Astrocyte of the cerebellum (primary cell): ENCODE measurements at regions of chr5 and their contacts with region 1.

Region 1: GRCh38 chr5:169980418-169981053 is at the start of gene INSYN2B:
- DNase-seq: peak; percentile 83
- H3K4me3 ChIP-seq: peak within 1 kb of the TSS; percentile 59
- CTCF ChIP-seq: peak; percentile 71

Region 2: DNA sequence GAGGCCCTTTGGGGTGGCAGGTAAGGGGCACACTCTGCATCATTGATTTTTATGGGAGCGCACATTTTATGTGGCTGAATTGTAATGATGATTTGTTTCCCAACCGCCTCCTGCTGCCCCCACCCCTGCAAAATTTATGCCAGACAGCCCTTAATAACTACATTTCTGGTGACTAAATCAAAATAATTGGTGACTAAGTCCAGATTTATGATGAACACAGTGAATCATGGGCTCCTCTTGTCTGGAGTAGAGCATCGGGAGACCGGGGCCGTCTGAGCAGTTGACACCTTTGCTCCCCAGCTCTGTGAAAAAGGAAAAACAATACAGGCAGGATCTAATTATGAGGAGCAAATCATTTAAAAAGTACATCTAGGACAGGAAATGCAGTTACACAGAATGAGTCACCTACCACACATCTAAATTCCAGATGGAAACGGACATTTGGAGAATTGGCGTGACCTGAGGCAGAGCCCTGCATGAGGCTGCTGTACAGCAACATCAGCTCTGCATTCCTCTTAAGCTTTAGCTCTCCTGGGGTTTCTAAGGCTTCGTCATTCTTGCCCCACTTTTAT is 284.5 kb before region 1 on chr5:
- in situ Hi-C with region 1: loop called (anchors 5 kb)
- DNase-seq: peak; percentile 99
- H3K4me3 ChIP-seq: no peak overlapping the region
- CTCF ChIP-seq: no peak